Sigmoid colon (tissue), 7 donors: ENCODE measurements at regions of chr2 and their contacts with region 1.

Region 1: DNA sequence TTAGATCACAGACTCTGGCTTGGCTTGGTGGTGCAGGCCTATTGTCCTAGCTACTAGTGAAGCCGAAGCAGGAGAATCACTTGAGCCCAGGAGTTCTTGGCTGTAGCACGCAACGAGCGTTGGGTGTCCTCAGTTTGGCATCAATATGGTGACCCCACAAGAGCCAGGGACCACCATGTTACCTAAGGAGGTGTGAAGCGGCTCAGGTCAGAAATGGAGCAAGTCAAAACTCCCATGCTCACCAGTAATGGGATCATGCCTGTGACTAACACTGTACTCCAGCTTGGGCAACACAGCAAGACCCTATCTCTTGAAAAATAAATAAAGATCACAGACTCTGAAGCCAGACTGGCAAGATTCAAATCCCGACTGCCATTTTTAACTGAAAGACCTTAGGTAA is 1.7 kb upstream of the NOL10 start:
- DNase-seq: no peak
- H3K4me3 ChIP-seq: no peak overlapping the region
- H3K27ac ChIP-seq: no peak overlapping the region
- H3K4me1 ChIP-seq: peaks cover 0 to 31% (median 21%) of the 10 kb centered on the region in 4 donors
- H3K27me3 ChIP-seq: no peaks in the 10 kb centered on the region
- CTCF ChIP-seq: no peak
- EP300 ChIP-seq: no peak
- POLR2A ChIP-seq: no peak

Region 2: GRCh38 chr2:10812362-10813162 is 121.0 kb after region 1 on chr2 and contains the start of gene PDIA6:
- intact Hi-C with region 1: loop called (anchors 2 kb)
- DNase-seq: peak; percentile 98
- H3K4me3 ChIP-seq: peak within 1 kb of the TSS; percentile 69 to 79 (median 74)
- H3K27ac ChIP-seq: peak within 1 kb of the TSS; percentile 87 to 98 (median 92)
- H3K4me1 ChIP-seq: peaks cover 0 to 36% (median 32%) of the 10 kb centered on the region in 4 donors
- H3K27me3 ChIP-seq: no peaks in the 10 kb centered on the region
- CTCF ChIP-seq: no peak
- EP300 ChIP-seq: no peak
- POLR2A ChIP-seq: no peak
- total RNA-seq, gene PDIA6: 57.3 to 90.3 (median 81.0) TPM